Vagina (tissue), 2 donors: ENCODE measurements at regions of chr6 and their contacts with region 1.

Region 1: DNA sequence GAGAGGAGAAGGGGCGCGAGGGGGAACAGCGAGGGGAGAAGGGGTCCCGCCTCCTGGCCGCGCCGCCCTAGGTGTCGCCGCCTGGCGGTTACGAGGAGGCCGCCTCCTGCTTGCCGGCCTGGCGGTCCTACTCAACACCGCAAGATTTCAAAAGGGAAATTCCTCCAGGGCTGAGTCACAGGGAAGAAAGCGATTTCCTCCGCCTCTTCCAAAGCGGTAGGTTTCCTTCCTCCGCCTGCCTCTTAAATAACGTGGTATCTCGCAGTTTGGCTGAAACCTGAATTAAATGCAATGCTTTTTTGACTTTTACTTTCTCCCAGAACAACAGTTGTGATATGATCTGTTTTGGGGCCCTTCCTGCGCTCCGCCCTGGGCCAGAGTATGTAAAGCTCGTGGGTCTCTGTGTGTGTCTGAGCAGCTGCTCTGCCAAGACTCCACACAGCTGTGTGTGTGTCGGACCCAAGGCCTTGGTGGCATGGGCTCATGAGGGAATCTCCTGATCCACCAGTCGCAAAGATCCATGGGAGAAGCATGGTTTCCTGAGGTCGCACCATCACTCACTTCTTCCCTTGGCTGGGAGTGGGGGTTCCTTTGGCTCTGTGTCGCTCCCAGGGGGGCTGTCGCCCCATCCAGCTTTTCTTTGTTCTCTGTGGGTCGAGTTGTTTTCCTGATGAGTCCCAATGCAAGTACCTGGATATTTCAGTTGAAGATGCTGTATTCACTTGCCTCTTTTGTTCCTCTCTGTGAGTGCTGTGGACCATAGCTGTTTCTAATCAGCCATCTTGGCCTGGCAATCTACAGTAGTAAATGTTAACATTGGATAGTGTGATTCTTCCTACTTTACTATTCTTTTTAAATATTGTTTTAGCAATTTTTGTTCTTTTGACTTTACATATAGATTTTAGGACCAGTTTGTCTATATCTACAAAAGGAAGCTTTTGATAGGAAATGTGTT is 31.6 kb upstream of the NOTCH4 start:
- DNase-seq: no peak
- H3K4me3 ChIP-seq: peak overlapping the region; percentile 49 to 59
- H3K27ac ChIP-seq: peak overlapping the region; percentile 77
- H3K4me1 ChIP-seq: peaks cover 18% of the 10 kb centered on the region
- H3K27me3 ChIP-seq: no peaks in the 10 kb centered on the region
- CTCF ChIP-seq: peak; percentile 14 to 69 (median 37)
- POLR2A ChIP-seq: peak in 1 of 2 donors; percentile 5

Region 2: GRCh38 chr6:32212076-32212760 is 43.3 kb before region 1 on chr6:
- intact Hi-C with region 1: no loop called
- DNase-seq: no peak
- H3K4me3 ChIP-seq: no peak overlapping the region
- H3K27ac ChIP-seq: no peak overlapping the region
- H3K4me1 ChIP-seq: no peaks in the 10 kb centered on the region
- H3K27me3 ChIP-seq: no peaks in the 10 kb centered on the region
- CTCF ChIP-seq: no peak
- POLR2A ChIP-seq: no peak

Region 3: GRCh38 chr6:32234934-32235333 is 20.5 kb before region 1 on chr6:
- intact Hi-C with region 1: loop called (anchors 2 kb)
- DNase-seq: no peak
- H3K4me3 ChIP-seq: no peak overlapping the region
- H3K27ac ChIP-seq: no peak overlapping the region
- H3K4me1 ChIP-seq: no peaks in the 10 kb centered on the region
- H3K27me3 ChIP-seq: no peaks in the 10 kb centered on the region
- CTCF ChIP-seq: no peak
- POLR2A ChIP-seq: no peak

Region 4: DNA sequence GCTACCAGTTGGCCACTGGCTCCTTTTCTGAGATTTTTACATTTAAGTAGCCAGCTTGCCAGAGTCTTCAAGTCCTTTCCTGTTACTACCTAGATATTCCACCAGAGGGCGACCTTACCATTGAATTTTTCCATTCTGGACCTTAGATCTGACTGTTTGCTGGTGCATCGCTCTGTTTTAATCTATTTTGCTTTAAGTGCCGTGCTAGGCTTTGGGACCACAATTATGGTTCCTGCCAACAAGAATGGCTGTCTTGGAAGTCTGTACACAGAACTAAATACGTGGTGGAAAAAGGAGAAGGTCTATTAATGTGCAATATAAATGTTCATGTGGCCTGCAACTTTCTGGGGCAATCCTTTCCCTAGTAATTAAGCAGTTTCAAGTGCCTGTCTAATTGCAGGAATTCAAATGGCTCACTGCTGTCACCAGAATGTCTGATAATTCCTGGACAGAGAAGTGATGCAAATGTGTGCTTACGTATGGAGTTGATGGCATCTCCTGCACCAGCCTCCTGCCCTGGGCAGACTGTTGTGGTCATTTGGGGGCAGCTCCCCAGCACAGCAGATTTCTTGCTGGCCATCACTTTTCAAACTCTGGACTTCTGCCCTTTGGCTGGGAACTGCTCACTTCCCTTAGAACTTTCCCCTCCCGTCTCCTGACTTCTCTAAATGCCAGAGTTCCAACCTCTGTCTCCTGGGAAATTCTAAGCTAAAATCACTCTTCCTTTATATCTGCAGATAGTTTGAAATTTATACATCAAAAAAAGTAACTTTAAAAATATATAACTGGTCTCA is 759.6 kb after region 1 on chr6:
- intact Hi-C with region 1: no loop called
- DNase-seq: no peak
- H3K4me3 ChIP-seq: no peak overlapping the region
- H3K27ac ChIP-seq: peak overlapping the region; percentile 35
- H3K4me1 ChIP-seq: peaks cover 16% of the 10 kb centered on the region
- H3K27me3 ChIP-seq: no peaks in the 10 kb centered on the region
- CTCF ChIP-seq: peak; percentile 78 to 81 (median 79)
- POLR2A ChIP-seq: no peak